ENCODE measurements at regions of chr6 and their contacts with region 1.

Region 1: DNA sequence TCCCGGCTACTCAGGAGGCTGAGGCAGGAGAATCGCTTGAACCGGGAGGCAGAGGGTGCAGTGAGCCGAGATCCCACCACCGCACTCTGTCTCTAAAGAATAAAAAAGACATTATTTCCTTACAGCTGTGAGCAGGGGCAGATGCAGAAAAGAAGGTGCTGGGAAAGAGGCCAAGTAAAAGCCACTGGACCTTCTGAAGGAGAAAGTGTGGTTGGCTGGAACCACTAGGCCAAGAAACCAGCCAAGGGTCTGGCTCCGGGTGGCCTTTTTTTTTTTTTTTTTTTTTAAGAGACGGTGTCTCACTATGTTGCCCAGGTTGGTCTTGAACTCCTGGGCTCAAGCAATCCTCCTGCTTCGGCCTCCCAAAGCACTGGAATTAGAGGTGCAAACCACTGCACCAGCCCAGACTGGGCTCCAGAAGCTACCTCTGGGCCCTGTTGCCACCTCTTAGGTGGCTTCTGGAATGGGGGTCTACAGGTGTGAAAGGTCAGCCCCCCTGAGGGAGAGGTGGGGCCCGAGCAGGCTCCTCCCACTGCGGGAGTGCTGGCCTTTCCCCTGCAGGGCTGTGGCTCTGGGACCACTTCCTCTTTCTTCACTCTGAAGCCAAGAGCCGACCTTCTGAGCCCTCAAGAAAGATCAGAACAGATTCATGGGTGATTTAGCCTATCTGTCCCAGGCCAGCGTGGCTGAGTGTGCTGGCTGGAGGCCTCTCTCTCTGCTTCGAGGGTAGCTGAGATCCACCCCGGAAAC is at the start of gene FGD2:
- DNase-seq: no peak
- ATAC-seq: peak; percentile 87
- H3K4me3 ChIP-seq: peak within 1 kb of the TSS; percentile 81
- H3K27ac ChIP-seq: peak within 1 kb of the TSS; percentile 88
- H3K4me1 ChIP-seq: peaks cover 38% of the 10 kb centered on the region
- H3K27me3 ChIP-seq: no peaks in the 10 kb centered on the region
- CTCF ChIP-seq: no peak
- EP300 ChIP-seq: peak; percentile 23 to 50; a peak in 1 of 4 replicates
- POLR2A ChIP-seq: peak; percentile 75
- RAD21 ChIP-seq: no peak
- polyA plus RNA-seq, gene FGD2: 5.2 to 11.3 TPM

Region 2: GRCh38 chr6:36874443-36875249 is 130.6 kb before region 1 on chr6 and contains the start of gene PPIL1:
- CTCF ChIA-PET with region 1: interaction called, 12 read pairs
- POLR2A ChIA-PET with region 1: no interaction called
- RAD21 ChIA-PET with region 1: interaction called, 7 read pairs
- SMC1A ChIA-PET with region 1: interaction called, 19 read pairs
- in situ Hi-C with region 1: no loop called
- intact Hi-C with region 1: no loop called
- DNase-seq: peak; percentile 78
- ATAC-seq: peak; percentile 93
- H3K4me3 ChIP-seq: peak within 1 kb of the TSS; percentile 79
- H3K27ac ChIP-seq: peak within 1 kb of the TSS; percentile 78
- H3K4me1 ChIP-seq: peaks cover 6% of the 10 kb centered on the region; the same call in 1 of the 2 replicates
- H3K27me3 ChIP-seq: no peaks in the 10 kb centered on the region
- CTCF ChIP-seq: no peak
- EP300 ChIP-seq: no peak
- POLR2A ChIP-seq: peak; percentile 81
- RAD21 ChIP-seq: no peak
- polyA plus RNA-seq, gene PPIL1: 74.4 to 95.8 TPM

Region 3: DNA sequence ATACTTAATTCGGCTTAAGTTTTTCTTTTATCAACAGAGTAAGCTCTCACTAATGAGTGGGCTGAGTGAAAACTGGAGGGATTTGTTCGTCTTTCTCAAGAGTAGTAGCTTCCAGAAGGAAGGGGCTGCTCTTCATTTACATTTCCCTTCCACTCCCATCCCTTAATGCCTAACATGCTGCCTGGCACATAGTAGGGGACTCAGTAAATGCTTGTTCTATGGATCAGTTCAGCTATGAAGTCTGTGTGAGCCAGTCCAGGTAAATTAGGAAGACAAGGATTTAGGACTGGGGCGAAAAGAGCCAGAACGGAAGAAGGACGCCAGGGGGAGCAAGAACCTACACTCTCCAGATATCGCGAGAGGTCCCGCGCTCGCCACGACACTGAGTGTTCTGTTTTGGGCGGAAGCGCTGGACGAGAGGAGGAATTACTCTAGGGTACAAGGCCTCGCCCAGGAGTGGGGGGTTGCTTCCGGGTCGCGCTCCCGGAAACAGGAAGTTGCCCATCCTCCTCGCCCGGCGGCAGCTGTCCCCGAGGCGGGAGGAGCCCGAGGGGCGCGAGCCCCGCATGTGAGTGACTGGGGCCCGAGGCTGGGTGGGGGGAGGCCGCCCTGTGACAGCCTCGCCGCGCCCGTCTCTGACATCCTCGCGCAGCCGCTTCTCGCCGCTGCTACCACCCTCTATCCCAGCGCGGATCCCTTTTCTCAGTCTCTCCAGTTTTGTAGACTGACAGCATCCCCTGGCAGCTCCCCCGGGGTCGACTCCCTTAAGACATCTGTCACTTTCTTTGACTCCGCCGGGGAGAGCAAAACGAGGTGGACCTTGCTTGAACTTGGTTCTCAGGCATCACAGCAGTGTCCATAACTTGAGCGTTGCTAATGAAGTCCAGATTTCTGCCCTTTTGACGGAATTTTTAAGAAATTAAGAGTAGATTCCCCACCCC is 119.5 kb before region 1 on chr6 and contains the start of gene C6orf89:
- CTCF ChIA-PET with region 1: interaction called, 13 read pairs
- POLR2A ChIA-PET with region 1: interaction called, 4 read pairs
- RAD21 ChIA-PET with region 1: interaction called, 11 read pairs
- SMC1A ChIA-PET with region 1: interaction called, 8 read pairs
- in situ Hi-C with region 1: no loop called
- intact Hi-C with region 1: no loop called
- DNase-seq: peak; percentile 92
- ATAC-seq: peak; percentile 98
- H3K4me3 ChIP-seq: peak within 1 kb of the TSS; percentile 99
- H3K27ac ChIP-seq: peak within 1 kb of the TSS; percentile 77
- H3K4me1 ChIP-seq: no peaks in the 10 kb centered on the region
- H3K27me3 ChIP-seq: no peaks in the 10 kb centered on the region
- CTCF ChIP-seq: peak; percentile 72 to 83 (median 79)
- EP300 ChIP-seq: no peak
- POLR2A ChIP-seq: peak; percentile 88
- RAD21 ChIP-seq: peak; percentile 24; the same call in 1 of the 2 replicates
- polyA plus RNA-seq, gene C6orf89: 10.8 to 11.4 TPM

Region 4: GRCh38 chr6:36979347-36979742 is 25.9 kb before region 1 on chr6:
- CTCF ChIA-PET with region 1: interaction called, 13 read pairs
- POLR2A ChIA-PET with region 1: interaction called, 74 read pairs
- RAD21 ChIA-PET with region 1: interaction called, 10 read pairs
- SMC1A ChIA-PET with region 1: interaction called, 25 read pairs
- in situ Hi-C with region 1: no loop called
- intact Hi-C with region 1: no loop called
- DNase-seq: no peak
- ATAC-seq: no peak
- H3K4me3 ChIP-seq: no peak overlapping the region
- H3K27ac ChIP-seq: no peak overlapping the region
- H3K4me1 ChIP-seq: peaks cover 8% of the 10 kb centered on the region
- H3K27me3 ChIP-seq: no peaks in the 10 kb centered on the region
- CTCF ChIP-seq: 0 out of 6 replicates have a peak, but pooled peaks of 1 of the 3 experiments have one; percentile 22
- EP300 ChIP-seq: no peak
- POLR2A ChIP-seq: no peak
- RAD21 ChIP-seq: peak; percentile 44

Region 5: DNA sequence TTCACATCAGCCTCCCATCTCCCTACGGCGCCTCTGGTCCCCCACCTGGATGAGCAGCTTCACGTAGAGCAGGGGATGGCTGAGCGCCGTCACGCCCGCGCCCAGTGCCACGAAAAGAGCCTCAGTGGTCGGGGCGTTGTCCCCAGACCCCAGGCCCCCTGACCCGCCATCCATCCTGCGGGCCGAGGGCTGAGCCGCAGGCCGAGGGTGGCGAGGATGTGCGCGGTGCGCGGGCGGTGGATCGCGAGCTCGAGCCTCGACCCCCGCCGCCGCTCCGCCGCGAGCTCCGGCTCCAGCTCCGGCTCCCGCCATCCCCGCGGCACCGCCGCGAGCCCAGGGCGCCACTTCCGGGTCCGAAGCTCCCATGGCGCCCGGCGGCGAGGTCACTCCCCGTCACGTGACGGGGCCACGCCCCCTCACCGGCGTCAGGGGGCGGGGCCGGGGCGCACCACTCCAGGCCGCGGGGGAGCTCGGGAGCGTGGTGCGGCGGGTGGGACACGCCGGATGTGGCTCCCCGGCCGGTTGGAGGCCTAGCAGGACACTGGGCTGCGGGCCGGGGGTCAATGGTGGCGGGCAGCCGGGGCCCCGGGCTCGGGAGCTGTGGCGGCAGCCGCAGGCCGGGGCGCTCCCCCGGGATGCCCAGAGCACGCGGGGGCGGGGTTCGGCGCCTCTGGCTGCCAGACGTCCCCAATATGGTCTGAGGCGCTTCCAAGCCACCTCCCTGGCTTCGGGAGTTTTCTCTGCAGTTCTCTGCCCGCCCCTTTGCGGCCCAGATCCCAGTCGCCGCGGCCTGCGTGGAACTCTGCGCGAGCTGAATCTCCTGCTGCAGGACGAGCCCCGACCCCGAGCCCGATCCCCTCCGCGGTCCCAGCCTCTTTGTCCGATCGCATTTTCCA is 19.2 kb before region 1 on chr6 and contains the start of gene MTCH1:
- CTCF ChIA-PET with region 1: interaction called, 13 read pairs
- POLR2A ChIA-PET with region 1: interaction called, 74 read pairs
- RAD21 ChIA-PET with region 1: interaction called, 42 read pairs
- SMC1A ChIA-PET with region 1: interaction called, 25 read pairs
- in situ Hi-C with region 1: no loop called
- intact Hi-C with region 1: loop called (anchors 2 kb)
- DNase-seq: peak; percentile 43
- ATAC-seq: peak; percentile 93
- H3K4me3 ChIP-seq: peak within 1 kb of the TSS; percentile 93
- H3K27ac ChIP-seq: peak within 1 kb of the TSS; percentile 90
- H3K4me1 ChIP-seq: peaks cover 9% of the 10 kb centered on the region
- H3K27me3 ChIP-seq: no peaks in the 10 kb centered on the region; a peak in 1 of 4 replicates
- CTCF ChIP-seq: no peak
- EP300 ChIP-seq: no peak
- POLR2A ChIP-seq: peak; percentile 96
- RAD21 ChIP-seq: no peak
- polyA plus RNA-seq, gene MTCH1: 7.2 to 17.3 TPM

Region 6: DNA sequence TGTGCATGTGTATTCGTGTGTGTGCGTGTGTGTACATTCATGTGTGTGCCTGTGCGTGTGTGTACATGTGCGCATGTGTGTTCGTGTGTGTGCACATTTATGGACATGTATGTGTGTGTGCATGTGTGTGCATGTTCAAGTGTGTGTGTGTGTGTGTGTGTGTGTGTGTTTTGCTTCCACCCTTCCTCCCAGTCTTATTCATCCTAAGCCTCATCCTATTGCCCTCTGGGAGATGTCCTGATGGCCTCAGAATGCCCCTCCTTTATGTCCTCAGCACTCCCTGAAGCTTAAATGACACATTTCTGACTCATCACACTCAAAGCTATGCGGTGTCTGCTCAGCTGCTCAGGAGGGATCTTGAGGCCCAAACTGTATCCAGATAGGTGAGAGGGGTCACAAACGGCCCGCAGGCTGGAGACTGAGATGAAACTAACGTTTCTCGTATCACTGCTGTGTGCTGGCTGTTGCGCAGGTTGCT is 571.1 kb after region 1 on chr6:
- CTCF ChIA-PET with region 1: no interaction called
- POLR2A ChIA-PET with region 1: no interaction called
- RAD21 ChIA-PET with region 1: no interaction called
- SMC1A ChIA-PET with region 1: no interaction called
- in situ Hi-C with region 1: no loop called
- intact Hi-C with region 1: no loop called
- DNase-seq: no peak
- ATAC-seq: no peak
- H3K4me3 ChIP-seq: no peak overlapping the region
- H3K27ac ChIP-seq: no peak overlapping the region
- H3K4me1 ChIP-seq: no peaks in the 10 kb centered on the region
- H3K27me3 ChIP-seq: no peaks in the 10 kb centered on the region
- CTCF ChIP-seq: no peak
- EP300 ChIP-seq: no peak
- POLR2A ChIP-seq: no peak
- RAD21 ChIP-seq: no peak

Measured in GM12878 (cell line).